Lower leg skin (tissue), 4 donors: ENCODE measurements at regions of chr12 and their contacts with region 1.

Region 1: GRCh38 chr12:12033589-12034223 is 37.0 kb upstream of the BCL2L14 start:
- DNase-seq: no peak
- H3K4me3 ChIP-seq: no peak overlapping the region
- CTCF ChIP-seq: no peak
- POLR2A ChIP-seq: no peak

Region 2: GRCh38 chr12:11581179-11581755 is 452.4 kb before region 1 on chr12:
- intact Hi-C with region 1: loop called (anchors 2 kb)
- DNase-seq: peak in 1 of 2 donors; percentile 74
- H3K4me3 ChIP-seq: no peak overlapping the region
- CTCF ChIP-seq: no peak
- POLR2A ChIP-seq: no peak